GM13977 (cell line): ENCODE measurements at regions of chr11 and their contacts with region 1.

Region 1: GRCh38 chr11:93921695-93922468 is 71.5 kb upstream of the VSTM5 start:
- DNase-seq: peak; percentile 61
- CTCF ChIP-seq: peak; percentile 71

Region 2: DNA sequence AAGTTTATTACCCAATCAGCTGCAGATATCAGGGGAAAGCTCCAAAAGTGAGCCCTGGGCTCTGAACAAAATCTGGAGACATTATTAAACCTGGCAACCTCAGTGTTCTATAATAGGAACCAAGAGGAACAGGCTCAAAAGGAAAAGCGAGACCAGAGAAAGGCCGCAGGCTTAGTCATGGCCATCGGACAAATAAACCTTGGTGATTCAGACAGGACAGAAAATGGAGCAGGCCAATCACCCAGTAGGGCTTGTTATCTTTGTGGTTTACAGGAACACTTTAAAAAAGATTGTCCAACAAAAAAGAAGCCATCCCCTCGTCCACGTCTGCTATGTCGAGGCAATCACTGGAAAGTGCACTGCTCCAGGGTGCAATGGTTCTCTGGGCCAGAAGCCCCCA is 199.1 kb after region 1 on chr11:
- in situ Hi-C with region 1: no loop called
- DNase-seq: no peak
- CTCF ChIP-seq: no peak

Region 3: DNA sequence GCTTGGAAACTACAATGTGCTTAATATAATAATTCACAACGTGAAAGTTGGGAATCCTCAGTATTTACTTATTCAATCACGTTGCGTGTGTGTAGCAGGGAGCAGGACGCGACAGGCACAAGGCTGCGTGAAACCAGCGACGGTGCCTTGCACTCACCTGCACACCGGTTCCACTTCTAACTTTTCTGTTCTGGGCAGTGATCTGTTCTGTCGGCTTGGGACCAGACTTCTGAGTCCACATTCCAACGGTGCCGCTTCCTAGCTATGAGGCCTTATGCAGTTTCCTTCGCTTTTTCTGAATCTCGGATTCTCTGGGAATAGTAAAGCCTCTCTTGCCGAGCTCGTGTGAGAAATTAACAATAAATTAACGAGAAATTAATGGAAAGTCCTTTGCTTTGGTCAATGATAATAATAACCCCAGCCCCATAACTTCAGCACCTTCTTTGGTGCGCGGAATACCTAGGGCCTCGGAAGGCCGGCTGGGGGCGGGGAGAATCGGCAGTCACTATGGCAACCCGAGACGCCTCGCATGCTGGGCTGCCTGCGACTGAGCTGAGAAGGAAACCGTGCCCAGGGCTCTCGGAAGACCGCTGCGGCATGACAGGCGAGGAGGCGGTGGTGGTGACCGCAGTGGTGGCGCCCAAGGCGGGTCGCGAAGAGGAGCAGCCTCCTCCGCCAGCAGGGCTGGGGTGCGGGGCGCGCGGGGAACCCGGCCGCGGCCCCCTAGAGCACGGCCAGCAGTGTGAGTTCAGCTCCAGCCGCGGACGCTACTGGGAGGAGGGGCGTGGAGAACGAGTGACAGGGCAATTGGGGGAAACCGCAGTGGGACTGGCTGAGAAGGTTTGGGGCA is 590.3 kb after region 1 on chr11 and contains the start of gene C11orf97:
- in situ Hi-C with region 1: loop called (anchors 25 kb)
- DNase-seq: peak; percentile 55
- CTCF ChIP-seq: no peak